Left cardiac atrium (tissue), 4 donors: ENCODE measurements at regions of chr13 and their contacts with region 1.

Region 1: DNA sequence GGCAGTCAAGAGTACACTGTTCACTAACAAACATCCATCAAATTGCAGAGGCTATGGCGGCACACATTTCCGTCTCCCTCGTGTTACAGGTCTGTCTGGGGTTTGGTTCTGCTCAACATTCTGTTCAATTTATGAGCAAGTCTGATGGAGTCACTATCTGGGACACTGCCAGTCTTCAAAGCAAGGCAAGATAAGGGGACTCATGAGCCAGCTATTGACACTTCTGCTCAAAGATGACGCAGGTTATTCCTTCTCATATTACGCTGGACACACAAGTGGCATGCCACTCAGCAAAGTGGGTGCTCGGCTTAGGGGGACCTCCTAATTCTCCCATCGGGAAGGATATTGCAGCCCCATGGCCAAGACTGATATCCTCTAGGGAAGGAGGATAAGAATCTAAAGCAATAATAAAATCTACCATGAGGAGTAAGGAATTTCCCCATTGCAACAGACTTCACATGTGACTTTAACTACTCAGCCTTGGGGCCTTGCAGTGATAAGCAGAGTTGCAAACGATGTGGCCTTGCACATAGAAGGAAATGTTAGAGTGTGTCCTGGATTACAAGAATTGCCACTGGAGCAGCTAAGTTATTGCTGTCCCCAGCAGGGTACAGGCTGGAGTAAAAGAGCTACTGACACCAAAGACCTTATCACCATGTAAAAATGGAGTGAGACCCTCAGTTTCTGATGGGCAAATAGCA is 306.2 kb downstream of the IRS2 start:
- DNase-seq: peak; percentile 34
- ATAC-seq: peak; percentile 69 to 86

Region 2: DNA sequence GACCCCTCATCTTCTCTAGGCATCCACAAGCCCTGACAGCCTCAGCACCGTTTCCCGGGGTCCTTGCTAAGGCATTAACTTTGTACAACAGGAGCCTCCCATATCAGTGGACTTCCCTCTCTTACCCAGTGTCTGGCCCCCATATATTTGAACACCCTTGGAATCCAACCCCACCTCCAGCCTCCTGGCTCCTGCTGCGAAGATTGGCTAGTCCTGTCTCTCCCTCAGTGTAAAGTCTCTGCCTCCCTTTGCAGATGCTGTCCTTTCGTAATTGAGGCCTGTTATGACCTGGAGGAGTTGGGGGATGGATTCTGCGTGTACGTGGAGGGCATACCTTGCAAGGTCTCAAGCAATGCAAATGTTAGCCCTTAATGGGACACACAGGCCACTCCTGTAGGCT is 107.5 kb before region 1 on chr13:
- intact Hi-C with region 1: no loop called
- DNase-seq: no peak
- ATAC-seq: no peak

Region 3: GRCh38 chr13:109383670-109384069 is 96.5 kb before region 1 on chr13:
- intact Hi-C with region 1: no loop called
- DNase-seq: no peak
- ATAC-seq: no peak

Region 4: DNA sequence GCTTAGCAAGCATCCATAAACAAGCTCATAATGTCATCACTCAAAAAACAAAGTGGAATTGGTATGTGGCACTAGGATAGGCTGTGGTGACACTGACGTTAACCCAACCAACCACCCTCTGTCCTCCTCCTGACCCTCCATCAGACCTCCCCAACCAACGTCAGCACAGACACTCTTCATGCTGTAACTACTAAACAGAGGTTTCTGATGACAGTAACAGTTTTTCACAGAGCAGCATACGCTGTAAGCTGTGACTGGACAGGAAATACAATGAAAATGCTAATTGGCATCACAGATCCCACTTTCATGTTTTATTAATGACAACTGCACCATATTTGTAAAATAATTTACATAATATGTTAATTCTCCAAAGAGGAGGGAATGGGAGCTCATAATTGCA is 68.2 kb after region 1 on chr13:
- intact Hi-C with region 1: loop called in 1 of 2 experiments (anchors 5 kb)
- DNase-seq: no peak
- ATAC-seq: no peak